Sigmoid colon (tissue), 7 donors: ENCODE measurements at regions of chr1 and their contacts with region 1.

Region 1: DNA sequence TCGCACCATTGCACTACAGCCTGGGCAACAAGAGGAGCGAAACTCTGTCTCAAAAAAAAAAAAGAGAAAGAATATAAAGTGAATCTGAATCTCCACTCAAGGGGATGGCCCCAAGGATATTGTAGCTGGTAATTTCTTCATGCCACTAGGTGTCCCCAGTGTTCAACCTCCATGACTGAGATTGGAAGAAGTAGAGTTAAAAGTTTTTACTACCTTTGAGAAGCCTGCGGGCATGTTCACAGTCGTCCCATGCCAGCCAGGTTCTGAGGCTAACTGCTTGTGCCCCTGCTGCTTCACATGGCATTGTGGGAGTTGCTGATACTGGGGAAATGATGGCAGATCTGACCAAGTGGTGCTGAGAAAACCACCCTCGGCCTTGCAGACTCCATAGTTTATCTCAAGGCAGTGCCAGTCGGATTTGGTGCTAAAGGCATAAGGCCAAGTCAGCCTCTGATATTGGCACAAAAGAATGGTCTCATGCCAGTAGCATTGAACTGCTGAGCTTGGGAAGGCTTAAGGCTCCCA is 10.8 kb upstream of the SHISA4 start:
- DNase-seq: no peak
- H3K4me3 ChIP-seq: no peak overlapping the region
- H3K27ac ChIP-seq: peak overlapping the region in 3 of 4 donors; percentile 42 to 47 (median 43)
- H3K4me1 ChIP-seq: peaks cover 0 to 11% (median 9%) of the 10 kb centered on the region in 4 donors
- H3K27me3 ChIP-seq: no peaks in the 10 kb centered on the region
- CTCF ChIP-seq: peak in 3 of 4 experiments; percentile 58 to 66 (median 62)
- EP300 ChIP-seq: no peak
- POLR2A ChIP-seq: no peak

Region 2: GRCh38 chr1:201818971-201819750 is 58.8 kb before region 1 on chr1:
- intact Hi-C with region 1: no loop called
- DNase-seq: no peak
- H3K4me3 ChIP-seq: no peak overlapping the region
- H3K27ac ChIP-seq: no peak overlapping the region
- H3K4me1 ChIP-seq: no peaks in the 10 kb centered on the region
- H3K27me3 ChIP-seq: no peaks in the 10 kb centered on the region
- CTCF ChIP-seq: no peak
- EP300 ChIP-seq: no peak
- POLR2A ChIP-seq: no peak

Region 3: GRCh38 chr1:201970334-201971159 is 92.6 kb after region 1 on chr1:
- intact Hi-C with region 1: loop called (anchors 2 kb)
- DNase-seq: no peak
- H3K4me3 ChIP-seq: no peak overlapping the region
- H3K27ac ChIP-seq: no peak overlapping the region
- H3K4me1 ChIP-seq: peaks cover 0 to 5% (median 2%) of the 10 kb centered on the region in 4 donors
- H3K27me3 ChIP-seq: no peaks in the 10 kb centered on the region
- CTCF ChIP-seq: no peak
- EP300 ChIP-seq: no peak
- POLR2A ChIP-seq: no peak